Activated T-helper 2 cell treated with anti-CD3 and anti-CD28 coated beads, Interferon-gamma antibody, Interleukin-2, Interleukin-4, amounts not matched to agents 10 μg/mL and 5 μg/mL and 100 μg/mL, durations not matched to agents 14 hours and 24 hours and 36 hours (primary cell): ENCODE measurements at regions of chr15 and their contacts with region 1.

Region 1: GRCh38 chr15:78131295-78132061 is at the start of gene CIB2:
- DNase-seq: peak; percentile 75
- H3K4me3 Mint-ChIP-seq: peak within 1 kb of the TSS; percentile 78
- H3K27ac Mint-ChIP-seq: peak within 1 kb of the TSS; percentile 40
- H3K4me1 Mint-ChIP-seq: peaks cover 20% of the 10 kb centered on the region
- H3K27me3 Mint-ChIP-seq: no peaks in the 10 kb centered on the region
- total RNA-seq, gene CIB2: 1.8 and 2.2 TPM in 2 replicates

Region 2: GRCh38 chr15:77959432-77959879 is 172.0 kb before region 1 on chr15:
- intact Hi-C with region 1: no loop called
- DNase-seq: peak; percentile 67
- H3K4me3 Mint-ChIP-seq: no peak overlapping the region
- H3K27ac Mint-ChIP-seq: no peak overlapping the region
- H3K4me1 Mint-ChIP-seq: peaks cover 16% of the 10 kb centered on the region
- H3K27me3 Mint-ChIP-seq: peaks cover 44% of the 10 kb centered on the region

Region 3: DNA sequence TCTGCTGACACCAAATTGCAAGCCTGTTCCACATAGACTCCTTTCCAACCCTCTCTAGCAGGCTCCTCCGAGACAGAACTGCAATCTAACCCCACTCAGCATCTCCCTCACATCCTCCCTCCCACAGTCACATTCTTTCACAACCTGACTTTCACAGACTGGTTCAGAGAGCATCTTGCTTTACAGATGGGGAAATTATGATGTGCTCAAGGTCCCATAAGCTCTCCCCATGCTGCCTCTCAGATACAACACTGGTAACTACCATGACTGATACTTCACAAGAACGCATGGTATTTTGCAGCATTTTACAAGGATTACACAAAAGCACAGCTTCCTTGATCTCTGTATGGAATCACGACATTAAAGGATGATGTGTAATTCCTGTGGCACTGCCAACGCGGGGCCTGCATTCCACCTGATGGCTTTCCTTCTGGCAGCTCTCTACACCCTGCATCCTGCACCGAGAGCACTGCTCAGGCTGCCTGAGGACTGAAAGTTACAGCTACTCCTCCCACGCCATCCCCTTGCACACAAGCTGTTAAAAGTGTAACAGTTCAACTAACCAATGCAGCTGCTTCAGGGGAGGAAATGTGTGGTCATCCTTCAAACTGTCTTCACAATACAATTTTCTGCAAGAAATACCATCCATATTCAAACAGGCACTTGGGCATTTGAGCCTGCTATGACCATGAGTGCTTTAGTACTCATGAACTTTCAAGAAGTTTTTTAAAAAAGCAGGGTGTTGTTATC is 81.6 kb before region 1 on chr15:
- intact Hi-C with region 1: no loop called
- DNase-seq: peak; percentile 57
- H3K4me3 Mint-ChIP-seq: peak overlapping the region; percentile 72
- H3K27ac Mint-ChIP-seq: peak overlapping the region; percentile 98
- H3K4me1 Mint-ChIP-seq: peaks cover 93% of the 10 kb centered on the region
- H3K27me3 Mint-ChIP-seq: no peaks in the 10 kb centered on the region

Region 4: DNA sequence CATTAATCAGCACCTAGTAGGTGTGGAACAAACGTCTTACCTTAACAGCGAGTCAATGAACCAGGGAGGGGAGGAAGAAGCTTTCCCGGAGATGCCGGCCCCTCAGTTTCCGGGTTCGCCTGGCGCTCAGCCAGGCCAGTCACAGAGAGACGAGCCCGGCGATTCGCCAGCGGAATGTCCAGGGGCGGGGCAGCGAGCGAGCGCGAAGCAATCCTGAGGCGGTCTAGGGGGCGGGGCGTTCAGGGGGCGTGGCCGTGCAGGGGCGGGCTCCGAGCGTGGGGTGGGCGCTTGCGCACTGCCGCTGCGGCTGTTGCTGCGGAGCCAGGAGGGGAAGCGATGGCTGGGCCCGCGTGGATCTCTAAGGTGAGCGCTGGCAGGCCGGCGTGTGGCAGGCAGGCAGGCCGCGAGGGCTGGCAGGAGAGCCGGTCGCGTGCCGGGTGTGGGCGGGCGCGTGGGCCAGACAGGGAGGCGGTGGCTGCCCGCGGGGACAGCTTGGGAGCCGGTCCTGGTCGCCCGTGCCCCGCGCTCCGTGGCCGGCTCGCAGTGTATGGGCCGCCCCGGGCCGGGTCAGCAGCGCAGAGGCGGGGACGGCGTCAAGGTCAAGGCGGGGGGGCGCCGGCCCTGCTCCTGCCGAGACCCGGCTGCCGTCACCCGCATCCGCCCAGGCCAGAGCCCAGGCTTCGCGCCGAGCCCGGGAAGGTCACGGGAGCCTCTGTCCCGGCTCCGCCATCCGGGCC is 17.8 kb after region 1 on chr15 and contains the start of gene IDH3A:
- intact Hi-C with region 1: loop called (anchors 1 kb)
- DNase-seq: peak; percentile 98
- H3K4me3 Mint-ChIP-seq: peak within 1 kb of the TSS; percentile 93
- H3K27ac Mint-ChIP-seq: peak within 1 kb of the TSS; percentile 84
- H3K4me1 Mint-ChIP-seq: peaks cover 39% of the 10 kb centered on the region
- H3K27me3 Mint-ChIP-seq: no peaks in the 10 kb centered on the region
- total RNA-seq, gene IDH3A: 132 and 152 TPM in 2 replicates

Region 5: DNA sequence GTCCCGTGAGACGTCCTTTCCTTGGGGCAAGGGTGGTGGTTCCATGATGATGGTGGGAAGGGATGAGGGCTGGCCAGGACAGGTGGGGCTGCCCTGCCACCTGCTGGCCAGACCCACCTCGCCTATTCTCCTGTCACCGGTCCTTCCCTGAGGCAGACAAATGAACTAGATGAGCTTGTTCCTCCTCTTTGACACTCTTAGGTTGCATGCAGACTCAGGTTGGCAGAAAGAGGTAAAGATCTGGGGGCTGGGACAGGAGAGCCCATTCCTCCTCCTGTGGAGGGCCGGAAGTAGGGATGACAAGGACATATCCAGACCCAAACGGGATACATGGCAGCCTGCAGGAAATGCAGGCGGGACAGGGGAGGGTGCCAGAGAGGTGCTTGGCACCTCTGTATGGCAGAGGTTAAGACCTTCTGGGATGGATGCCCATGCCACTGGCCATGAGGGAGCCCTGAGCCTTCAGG is 64.3 kb after region 1 on chr15:
- intact Hi-C with region 1: loop called (anchors 1 kb)
- DNase-seq: peak; percentile 23
- H3K4me3 Mint-ChIP-seq: no peak overlapping the region
- H3K27ac Mint-ChIP-seq: no peak overlapping the region
- H3K4me1 Mint-ChIP-seq: no peaks in the 10 kb centered on the region
- H3K27me3 Mint-ChIP-seq: peaks cover 8% of the 10 kb centered on the region

Region 6: DNA sequence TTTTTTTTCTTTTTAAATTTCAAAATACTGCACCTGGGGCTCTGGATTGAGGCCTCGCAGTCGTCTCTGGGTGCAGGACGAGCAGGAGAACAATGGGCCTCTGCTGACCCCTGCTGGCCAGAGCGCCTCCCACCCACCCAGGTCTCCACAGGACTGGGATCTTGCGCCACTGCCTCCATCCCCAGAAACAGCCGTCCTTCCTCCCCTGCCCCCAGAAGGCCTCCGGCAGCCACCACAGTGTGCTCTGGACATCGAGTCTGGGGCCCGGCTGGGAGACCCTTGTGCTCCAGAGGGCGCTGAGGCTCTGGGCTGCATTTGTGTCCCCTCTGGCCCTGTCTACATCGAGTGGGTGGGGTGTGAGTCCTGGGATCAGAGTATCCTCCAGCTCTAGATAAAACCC is 109.5 kb after region 1 on chr15:
- intact Hi-C with region 1: loop called (anchors 1 kb)
- DNase-seq: peak; percentile 70
- H3K4me3 Mint-ChIP-seq: no peak overlapping the region
- H3K27ac Mint-ChIP-seq: no peak overlapping the region
- H3K4me1 Mint-ChIP-seq: peaks cover 3% of the 10 kb centered on the region
- H3K27me3 Mint-ChIP-seq: peaks cover 6% of the 10 kb centered on the region